Prostate gland (tissue), 2 donors: ENCODE measurements at regions of chr5 and their contacts with region 1.

Region 1: DNA sequence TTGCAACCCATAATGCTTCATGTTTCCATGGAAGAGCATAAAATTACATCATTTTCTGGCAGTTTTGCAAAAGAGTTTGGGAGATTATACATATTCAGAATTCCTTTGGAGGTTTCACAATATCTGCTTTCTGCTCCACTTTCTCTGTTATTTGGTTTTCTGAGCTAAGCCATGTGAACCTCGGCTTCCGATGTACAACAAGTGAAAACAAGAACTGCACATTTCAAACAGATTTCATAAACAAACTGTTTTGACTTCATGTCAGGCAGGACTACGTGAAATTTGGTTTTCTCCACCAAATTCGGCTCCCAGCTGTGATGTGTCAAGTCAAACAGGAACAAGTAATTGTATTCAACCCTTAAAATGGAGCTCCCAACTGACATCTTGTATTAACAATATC is 609.8 kb downstream of the IRX1 start:
- DNase-seq: no peak
- H3K4me3 ChIP-seq: no peak overlapping the region
- H3K27ac ChIP-seq: no peak overlapping the region
- H3K4me1 ChIP-seq: no peaks in the 10 kb centered on the region
- H3K27me3 ChIP-seq: no peaks in the 10 kb centered on the region
- CTCF ChIP-seq: no peak
- POLR2A ChIP-seq: no peak

Region 2: GRCh38 chr5:4027088-4027734 is 178.2 kb before region 1 on chr5:
- intact Hi-C with region 1: loop called (anchors 10 kb)
- DNase-seq: no peak
- H3K4me3 ChIP-seq: no peak overlapping the region
- H3K27ac ChIP-seq: no peak overlapping the region
- H3K4me1 ChIP-seq: no peaks in the 10 kb centered on the region
- H3K27me3 ChIP-seq: no peaks in the 10 kb centered on the region
- CTCF ChIP-seq: no peak
- POLR2A ChIP-seq: no peak

Region 3: DNA sequence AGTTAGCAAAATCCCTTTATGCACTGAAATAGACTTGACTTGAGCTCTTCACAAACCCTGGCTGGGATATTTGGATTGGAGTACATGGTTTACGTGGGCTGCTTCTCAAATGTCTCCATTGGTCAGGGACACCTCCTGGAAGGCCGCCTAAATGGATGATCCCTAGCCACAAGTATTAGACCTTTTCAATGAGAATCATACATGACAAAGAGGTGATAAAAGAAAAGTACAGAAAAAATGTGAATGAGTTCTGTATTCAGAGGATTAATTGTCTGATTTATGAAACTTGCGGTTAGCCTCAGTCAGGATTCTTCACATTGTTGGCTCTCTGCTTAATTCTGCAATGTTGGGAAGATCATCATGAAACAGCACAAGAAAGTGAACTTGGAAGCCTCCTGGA is 181.9 kb after region 1 on chr5:
- intact Hi-C with region 1: no loop called
- DNase-seq: no peak
- H3K4me3 ChIP-seq: no peak overlapping the region
- H3K27ac ChIP-seq: no peak overlapping the region
- H3K4me1 ChIP-seq: no peaks in the 10 kb centered on the region
- H3K27me3 ChIP-seq: no peaks in the 10 kb centered on the region
- CTCF ChIP-seq: no peak
- POLR2A ChIP-seq: no peak